ENCODE measurements at regions of chr22 and their contacts with region 1.

Region 1: GRCh38 chr22:38569972-38570778 is at the start of gene DMC1:
- DNase-seq: peak; percentile 67
- H3K4me3 ChIP-seq: peak within 1 kb of the TSS; percentile 48 to 73 (median 65)
- H3K27ac ChIP-seq: peak within 1 kb of the TSS; percentile 24
- H3K4me1 ChIP-seq: peaks cover 21% of the 10 kb centered on the region
- H3K27me3 ChIP-seq: no peaks in the 10 kb centered on the region
- CTCF ChIP-seq: no peak
- total RNA-seq, gene DMC1: 0.50 to 1.3 TPM

Region 2: GRCh38 chr22:38353142-38353629 is 217.0 kb before region 1 on chr22:
- CTCF ChIA-PET with region 1: no interaction called
- dilution Hi-C with region 1: no loop called
- in situ Hi-C with region 1: no loop called
- intact Hi-C with region 1: loop called (anchors 5 kb)
- DNase-seq: peak; percentile 52
- H3K4me3 ChIP-seq: no peak overlapping the region
- H3K27ac ChIP-seq: no peak overlapping the region
- H3K4me1 ChIP-seq: peaks cover 11% of the 10 kb centered on the region
- H3K27me3 ChIP-seq: no peaks in the 10 kb centered on the region
- CTCF ChIP-seq: peak; percentile 76 to 93

Region 3: GRCh38 chr22:38429499-38430068 is 140.6 kb before region 1 on chr22:
- CTCF ChIA-PET with region 1: no interaction called
- dilution Hi-C with region 1: loop called (anchors 5 kb)
- in situ Hi-C with region 1: no loop called
- intact Hi-C with region 1: no loop called
- DNase-seq: no peak
- H3K4me3 ChIP-seq: no peak overlapping the region
- H3K27ac ChIP-seq: no peak overlapping the region
- H3K4me1 ChIP-seq: no peaks in the 10 kb centered on the region
- H3K27me3 ChIP-seq: no peaks in the 10 kb centered on the region
- CTCF ChIP-seq: no peak

Region 4: GRCh38 chr22:38524429-38524828 is 45.7 kb before region 1 on chr22:
- CTCF ChIA-PET with region 1: no interaction called
- dilution Hi-C with region 1: loop called (anchors 5 kb)
- in situ Hi-C with region 1: no loop called
- intact Hi-C with region 1: no loop called
- DNase-seq: no peak
- H3K4me3 ChIP-seq: no peak overlapping the region
- H3K27ac ChIP-seq: no peak overlapping the region
- H3K4me1 ChIP-seq: no peaks in the 10 kb centered on the region
- H3K27me3 ChIP-seq: no peaks in the 10 kb centered on the region
- CTCF ChIP-seq: no peak

Measured in mammary epithelial cell (primary cell).